ACHN (cell line): ENCODE measurements at regions of chr4 and their contacts with region 1.

Region 1: DNA sequence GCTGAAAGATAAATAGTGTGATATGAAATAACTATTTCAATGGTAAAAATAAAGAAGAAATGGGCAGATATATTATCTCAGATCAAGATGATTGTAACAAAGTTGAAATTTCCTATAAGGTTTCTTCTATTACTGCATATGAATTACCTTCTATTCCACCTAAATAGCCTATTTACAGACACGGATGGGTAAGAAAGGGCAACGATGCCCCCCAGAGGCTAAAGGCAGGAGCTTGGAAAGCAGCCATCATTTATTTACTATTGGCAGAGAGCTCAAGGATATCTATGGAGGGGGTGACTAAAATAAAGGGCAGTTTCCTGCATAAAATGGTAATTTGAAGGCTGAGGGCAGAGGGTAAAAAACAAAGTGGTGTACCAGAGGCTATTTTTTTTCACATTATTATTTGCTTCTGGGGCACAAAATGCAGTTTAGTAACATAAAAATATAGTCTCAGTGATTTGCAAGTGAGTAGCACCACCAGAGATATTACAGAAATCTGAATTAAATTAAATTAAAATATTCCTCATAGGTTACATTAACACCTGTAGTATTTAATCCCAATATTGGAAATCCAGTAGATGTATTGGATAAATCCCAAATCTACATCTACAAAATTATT is 123.1 kb downstream of the BTC start:
- DNase-seq: peak; percentile 81

Region 2: GRCh38 chr4:74189331-74190043 is 481.7 kb before region 1 on chr4:
- in situ Hi-C with region 1: loop called (anchors 25 kb)
- DNase-seq: peak; percentile 68

Region 3: DNA sequence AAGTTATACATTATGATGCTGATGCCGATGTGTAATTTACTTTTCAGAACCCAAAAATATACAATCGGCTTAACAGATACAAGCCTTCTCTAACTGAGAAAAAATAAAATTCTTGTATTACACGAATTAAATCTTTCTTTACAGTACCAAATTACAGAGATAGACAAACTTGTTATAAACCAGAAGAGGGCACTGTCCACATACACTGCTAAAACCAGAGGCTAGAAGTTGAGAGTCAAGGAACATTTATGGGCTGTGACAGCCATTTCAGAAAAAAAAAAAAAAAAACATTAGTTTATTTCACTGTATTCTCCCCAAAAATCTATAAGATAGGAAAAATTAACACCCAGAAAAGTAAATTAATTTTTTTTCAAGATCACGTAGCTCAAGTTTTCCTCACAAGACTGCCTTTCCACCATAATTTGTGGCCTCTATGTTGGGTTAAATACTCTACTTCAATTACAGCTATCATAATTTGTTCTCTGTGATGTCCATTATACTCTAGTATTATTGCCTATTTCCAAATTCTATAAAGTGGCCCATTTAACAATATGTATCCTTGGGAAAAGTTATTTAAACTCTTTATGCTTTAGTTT is 294.2 kb before region 1 on chr4:
- in situ Hi-C with region 1: loop called (anchors 25 kb)
- DNase-seq: peak; percentile 69

Region 4: GRCh38 chr4:74845834-74846233 is 174.6 kb after region 1 on chr4:
- in situ Hi-C with region 1: no loop called
- DNase-seq: no peak